Mammary epithelial cell (primary cell): ENCODE measurements at regions of chr9 and their contacts with region 1.

Region 1: DNA sequence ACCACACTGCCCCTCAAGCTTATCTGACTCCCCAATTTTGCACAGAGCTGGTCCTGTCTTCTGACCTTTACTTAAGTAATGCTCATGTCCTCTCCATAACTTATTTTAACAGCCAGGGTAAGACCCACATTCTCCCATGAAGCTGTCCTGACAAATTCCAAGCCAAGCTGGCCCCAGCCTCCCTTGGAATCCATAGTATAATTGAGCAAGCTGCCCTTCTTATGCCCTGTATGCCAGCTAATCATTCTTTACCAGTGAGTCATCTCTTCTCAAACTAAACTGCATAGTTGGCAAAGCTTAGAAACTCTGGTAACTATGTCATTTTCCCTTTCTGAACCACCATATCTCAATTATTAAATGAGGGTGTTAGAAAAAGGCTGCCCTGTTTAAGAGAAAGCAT is 92.4 kb downstream of the NFIB start:
- DNase-seq: peak; percentile 70
- H3K4me3 ChIP-seq: no peak overlapping the region
- H3K27ac ChIP-seq: peak overlapping the region; percentile 42
- H3K4me1 ChIP-seq: peaks cover 38% of the 10 kb centered on the region
- H3K27me3 ChIP-seq: no peaks in the 10 kb centered on the region
- CTCF ChIP-seq: no peak

Region 2: DNA sequence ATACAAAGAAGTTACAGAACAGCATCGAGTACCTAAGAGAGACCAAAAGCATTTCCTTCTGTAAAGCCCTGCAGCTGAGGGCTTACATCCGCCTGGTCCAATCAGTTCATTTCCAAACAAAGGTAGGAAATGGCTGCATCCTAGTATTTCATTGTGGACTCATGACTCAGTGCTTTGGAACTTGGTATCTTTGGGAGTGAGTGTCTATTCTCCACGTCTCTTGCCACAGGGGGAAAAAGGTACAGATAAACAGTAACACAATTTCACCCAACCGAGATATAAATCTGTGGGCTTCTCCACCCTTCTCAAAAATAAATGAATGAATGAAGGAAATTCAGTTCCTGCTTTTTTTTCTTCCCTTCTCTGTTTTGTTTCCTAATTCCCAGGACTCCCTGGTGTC is 17.0 kb after region 1 on chr9:
- CTCF ChIA-PET with region 1: no interaction called
- dilution Hi-C with region 1: no loop called
- in situ Hi-C with region 1: no loop called
- intact Hi-C with region 1: loop called (anchors 2 kb)
- DNase-seq: peak; percentile 88
- H3K4me3 ChIP-seq: no peak overlapping the region
- H3K27ac ChIP-seq: peak overlapping the region; percentile 60
- H3K4me1 ChIP-seq: peaks cover 36% of the 10 kb centered on the region
- H3K27me3 ChIP-seq: no peaks in the 10 kb centered on the region
- CTCF ChIP-seq: no peak